ENCODE measurements at regions of chr1 and their contacts with region 1.

Region 1: DNA sequence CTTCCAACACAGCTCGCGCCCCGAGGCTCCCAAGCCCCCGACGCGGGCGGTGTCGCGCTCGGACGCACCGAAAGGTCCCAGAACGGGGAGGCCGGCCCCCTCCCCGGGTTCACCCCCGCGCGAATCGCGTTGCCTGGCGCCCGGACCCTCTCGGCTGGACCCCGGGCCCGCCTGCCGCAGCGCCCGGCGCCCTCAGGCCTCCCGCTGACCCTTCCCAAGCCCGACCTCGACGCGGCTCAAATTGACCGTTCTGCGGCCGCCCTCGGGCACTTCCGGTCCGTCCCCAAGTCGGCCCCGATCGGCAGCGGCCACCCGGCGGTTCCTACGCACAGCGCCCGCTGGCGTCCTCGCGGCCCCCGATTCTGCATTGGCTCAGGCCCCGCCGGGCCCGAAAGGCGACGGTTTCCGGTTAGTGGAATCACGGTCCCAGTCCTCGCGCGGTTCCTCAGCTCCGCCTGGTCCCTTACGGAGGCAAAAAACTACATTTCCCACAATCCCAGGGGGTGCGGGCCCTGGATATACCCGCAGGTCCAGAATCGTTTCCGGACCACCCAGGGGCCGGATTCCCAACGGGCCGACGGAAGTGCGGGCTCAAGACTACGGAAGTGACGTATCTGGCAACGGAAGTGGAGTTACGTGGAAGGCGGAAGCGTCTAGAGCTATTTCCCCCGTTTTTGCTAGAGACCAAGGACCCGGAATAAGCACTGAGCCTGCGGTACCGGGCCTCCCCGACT is at the start of gene AURKAIP1:
- DNase-seq: peak; percentile 98
- ATAC-seq: peak; percentile 85
- H3K4me3 Mint-ChIP-seq: peak within 1 kb of the TSS; percentile 90
- H3K27ac Mint-ChIP-seq: peak within 1 kb of the TSS; percentile 98
- H3K4me1 Mint-ChIP-seq: peaks cover 40% of the 10 kb centered on the region
- H3K27me3 Mint-ChIP-seq: no peaks in the 10 kb centered on the region
- total RNA-seq, gene AURKAIP1: 120 to 123 TPM

Region 2: DNA sequence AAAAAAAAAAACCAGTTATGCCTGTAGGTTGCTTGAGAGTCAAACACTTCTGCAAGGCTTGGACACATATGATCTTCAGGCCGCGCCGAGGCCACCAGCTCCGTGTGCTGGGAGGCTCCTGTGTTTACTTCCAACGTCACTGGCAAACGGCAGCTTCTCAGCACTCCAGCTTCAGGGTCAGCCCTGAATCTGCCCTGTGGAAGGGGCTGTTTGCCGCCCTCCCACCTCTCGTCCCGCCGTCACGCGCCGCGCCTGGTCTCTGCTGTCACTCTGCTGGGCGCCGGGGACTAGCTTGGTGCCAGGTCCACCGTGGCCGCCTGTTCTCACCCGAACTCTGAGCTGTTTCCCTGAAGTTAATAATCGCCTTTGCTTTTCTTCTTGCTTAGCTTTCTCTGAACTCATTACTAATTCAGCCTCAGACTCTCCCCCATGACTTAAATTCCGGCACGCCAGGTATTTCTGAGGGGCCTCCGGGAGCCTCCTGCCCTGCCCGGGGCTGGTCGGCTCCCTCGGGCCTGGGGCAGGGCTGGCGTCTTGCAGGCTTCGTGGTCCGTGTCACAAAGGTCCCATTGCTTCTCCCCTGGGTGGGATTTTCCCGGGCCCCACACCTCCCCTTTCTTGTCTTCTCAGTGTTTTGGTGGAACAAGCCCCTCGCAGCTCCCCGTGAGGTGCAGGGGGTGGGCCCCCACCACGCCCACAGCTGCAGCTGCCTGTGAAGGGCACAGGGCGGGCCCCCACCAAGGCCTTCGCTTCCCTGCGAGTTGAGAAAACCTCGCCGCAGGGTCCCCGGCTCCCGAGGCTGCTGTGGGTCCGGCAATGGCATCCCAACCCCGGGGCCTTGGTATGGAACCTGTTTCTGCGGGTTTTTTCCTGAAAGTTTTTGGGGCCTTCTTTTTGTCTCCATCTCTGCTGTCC is 244.6 kb before region 1 on chr1:
- CTCF ChIA-PET with region 1: no interaction called
- POLR2A ChIA-PET with region 1: no interaction called
- DNase-seq: no peak
- ATAC-seq: no peak
- H3K4me3 Mint-ChIP-seq: no peak overlapping the region
- H3K27ac Mint-ChIP-seq: no peak overlapping the region
- H3K4me1 Mint-ChIP-seq: no peaks in the 10 kb centered on the region
- H3K27me3 Mint-ChIP-seq: peaks cover 3% of the 10 kb centered on the region

Region 3: GRCh38 chr1:1349256-1350012 is 25.7 kb before region 1 on chr1 and contains the start of gene DVL1:
- CTCF ChIA-PET with region 1: interaction called, 14 read pairs
- POLR2A ChIA-PET with region 1: interaction called, 4 read pairs
- DNase-seq: peak; percentile 73
- ATAC-seq: peak; percentile 84
- H3K4me3 Mint-ChIP-seq: peak within 1 kb of the TSS; percentile 70
- H3K27ac Mint-ChIP-seq: peak within 1 kb of the TSS; percentile 57
- H3K4me1 Mint-ChIP-seq: peaks cover 29% of the 10 kb centered on the region
- H3K27me3 Mint-ChIP-seq: peaks cover 21% of the 10 kb centered on the region
- total RNA-seq, gene DVL1: 29.1 to 30.7 TPM

Region 4: GRCh38 chr1:1399187-1399871 is 24.2 kb after region 1 on chr1 and contains the start of gene CCNL2:
- CTCF ChIA-PET with region 1: interaction called, 7 read pairs
- POLR2A ChIA-PET with region 1: interaction called, 41 read pairs
- DNase-seq: peak; percentile 99
- ATAC-seq: peak; percentile 96
- H3K4me3 Mint-ChIP-seq: peak within 1 kb of the TSS; percentile 92
- H3K27ac Mint-ChIP-seq: peak within 1 kb of the TSS; percentile 90
- H3K4me1 Mint-ChIP-seq: peaks cover 51% of the 10 kb centered on the region
- H3K27me3 Mint-ChIP-seq: no peaks in the 10 kb centered on the region
- total RNA-seq, gene CCNL2: 98.3 to 110 TPM

Region 5: GRCh38 chr1:1406817-1407635 is 31.9 kb after region 1 on chr1 and contains the start of gene MRPL20:
- CTCF ChIA-PET with region 1: interaction called, 5 read pairs
- POLR2A ChIA-PET with region 1: interaction called, 15 read pairs
- DNase-seq: peak; percentile 98
- ATAC-seq: peak; percentile 95
- H3K4me3 Mint-ChIP-seq: peak within 1 kb of the TSS; percentile 87
- H3K27ac Mint-ChIP-seq: peak within 1 kb of the TSS; percentile 95
- H3K4me1 Mint-ChIP-seq: peaks cover 39% of the 10 kb centered on the region
- H3K27me3 Mint-ChIP-seq: no peaks in the 10 kb centered on the region
- total RNA-seq, gene MRPL20: 111 to 117 TPM